ENCODE measurements at regions of chr2 and their contacts with region 1.

Region 1: GRCh38 chr2:10434886-10435819 is 13.0 kb downstream of the ODC1 start:
- DNase-seq: peak; percentile 51 to 86 (median 74)
- ATAC-seq: peak; percentile 74
- H3K4me3 ChIP-seq: no peak overlapping the region
- H3K4me3 Mint-ChIP-seq: no peak overlapping the region
- H3K27ac ChIP-seq: no peak overlapping the region
- H3K27ac Mint-ChIP-seq: no peak overlapping the region
- H3K4me1 ChIP-seq: peaks cover 14% of the 10 kb centered on the region
- H3K4me1 Mint-ChIP-seq: peaks cover 16% of the 10 kb centered on the region
- H3K27me3 ChIP-seq: peaks cover 0 to 4% of the 10 kb centered on the region in 2 experiments
- H3K27me3 Mint-ChIP-seq: peaks cover 2% of the 10 kb centered on the region
- CTCF ChIP-seq: peak; percentile 93

Region 2: GRCh38 chr2:9984217-9984739 is 450.9 kb before region 1 on chr2:
- CTCF ChIA-PET with region 1: interaction called, 11 read pairs
- POLR2A ChIA-PET with region 1: no interaction called
- intact Hi-C with region 1: no loop called
- DNase-seq: peak in 6 of 9 experiments; percentile 7 to 77 (median 21)
- ATAC-seq: peak; percentile 87
- H3K4me3 ChIP-seq: no peak overlapping the region
- H3K4me3 Mint-ChIP-seq: no peak overlapping the region
- H3K27ac ChIP-seq: no peak overlapping the region
- H3K27ac Mint-ChIP-seq: no peak overlapping the region
- H3K4me1 ChIP-seq: peaks cover 9% of the 10 kb centered on the region
- H3K4me1 Mint-ChIP-seq: peaks cover 11% of the 10 kb centered on the region
- H3K27me3 ChIP-seq: no peaks in the 10 kb centered on the region
- H3K27me3 Mint-ChIP-seq: peaks cover 4% of the 10 kb centered on the region
- CTCF ChIP-seq: peak; percentile 84

Region 3: GRCh38 chr2:10141736-10142642 is 293.2 kb before region 1 on chr2:
- CTCF ChIA-PET with region 1: interaction called, 23 read pairs
- POLR2A ChIA-PET with region 1: no interaction called
- intact Hi-C with region 1: no loop called
- DNase-seq: peak in 5 of 9 experiments; percentile 28 to 49 (median 35)
- ATAC-seq: peak; percentile 62
- H3K4me3 ChIP-seq: no peak overlapping the region
- H3K4me3 Mint-ChIP-seq: peak overlapping the region; percentile 37
- H3K27ac ChIP-seq: no peak overlapping the region
- H3K27ac Mint-ChIP-seq: no peak overlapping the region
- H3K4me1 ChIP-seq: peaks cover 17% of the 10 kb centered on the region
- H3K4me1 Mint-ChIP-seq: peaks cover 18% of the 10 kb centered on the region
- H3K27me3 ChIP-seq: no peaks in the 10 kb centered on the region
- H3K27me3 Mint-ChIP-seq: no peaks in the 10 kb centered on the region
- CTCF ChIP-seq: peak; percentile 17

Region 4: DNA sequence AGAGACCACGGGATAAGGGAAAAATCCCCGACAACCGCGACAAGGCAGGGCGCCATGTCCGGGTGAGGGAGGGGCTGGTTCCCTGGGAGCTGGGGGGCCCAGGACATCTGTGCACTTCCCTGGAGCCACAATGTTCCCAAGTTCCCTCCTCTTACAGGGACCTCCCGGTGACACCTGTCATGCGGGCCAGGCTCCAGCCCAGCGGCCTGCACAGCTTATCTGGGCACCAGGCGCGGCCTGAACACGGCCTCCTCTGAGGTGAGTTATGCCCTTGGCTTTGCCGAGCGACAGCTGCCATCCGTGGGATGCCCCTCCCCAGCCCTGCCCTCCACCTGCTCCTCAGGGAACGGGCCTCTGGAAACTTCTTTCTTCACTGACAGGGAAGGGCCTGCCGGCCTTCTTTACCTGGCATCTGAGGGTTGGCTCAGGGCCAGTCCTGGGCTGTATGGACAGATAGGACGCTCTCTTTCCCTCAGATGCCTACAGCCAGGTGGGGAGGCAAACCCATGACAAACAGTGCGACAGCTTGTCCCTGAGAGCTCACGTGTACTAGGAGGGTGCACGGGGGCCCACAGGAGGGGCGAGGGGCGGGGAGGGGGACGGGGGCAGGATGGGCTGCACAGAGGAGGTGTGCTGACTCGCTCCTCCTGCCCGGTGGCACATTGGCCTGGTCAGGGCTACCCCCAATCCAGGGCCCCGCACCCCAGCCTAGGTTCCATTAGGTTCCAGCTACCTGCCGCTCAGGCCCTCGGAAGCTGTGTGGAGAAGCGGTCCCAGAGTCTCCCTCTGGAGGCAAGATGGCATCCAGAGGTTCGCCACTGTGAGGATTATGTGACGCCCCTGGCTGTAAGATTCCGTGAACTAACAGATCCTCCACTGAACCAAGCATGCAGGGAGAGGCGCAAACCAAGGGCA is 167.3 kb before region 1 on chr2:
- CTCF ChIA-PET with region 1: interaction called, 43 read pairs
- POLR2A ChIA-PET with region 1: no interaction called
- intact Hi-C with region 1: loop called (anchors 1 kb)
- DNase-seq: no peak
- ATAC-seq: no peak
- H3K4me3 ChIP-seq: no peak overlapping the region
- H3K4me3 Mint-ChIP-seq: no peak overlapping the region
- H3K27ac ChIP-seq: no peak overlapping the region
- H3K27ac Mint-ChIP-seq: no peak overlapping the region
- H3K4me1 ChIP-seq: peaks cover 10% of the 10 kb centered on the region
- H3K4me1 Mint-ChIP-seq: peaks cover 6% of the 10 kb centered on the region
- H3K27me3 ChIP-seq: no peaks in the 10 kb centered on the region
- H3K27me3 Mint-ChIP-seq: no peaks in the 10 kb centered on the region
- CTCF ChIP-seq: no peak

Region 5: GRCh38 chr2:10398496-10398895 is 36.7 kb before region 1 on chr2:
- CTCF ChIA-PET with region 1: no interaction called
- POLR2A ChIA-PET with region 1: no interaction called
- intact Hi-C with region 1: no loop called
- DNase-seq: no peak
- ATAC-seq: no peak
- H3K4me3 ChIP-seq: no peak overlapping the region
- H3K4me3 Mint-ChIP-seq: no peak overlapping the region
- H3K27ac ChIP-seq: no peak overlapping the region
- H3K27ac Mint-ChIP-seq: peak overlapping the region; percentile 72
- H3K4me1 ChIP-seq: peaks cover 19% of the 10 kb centered on the region
- H3K4me1 Mint-ChIP-seq: peaks cover 51% of the 10 kb centered on the region
- H3K27me3 ChIP-seq: no peaks in the 10 kb centered on the region
- H3K27me3 Mint-ChIP-seq: no peaks in the 10 kb centered on the region
- CTCF ChIP-seq: no peak

Region 6: GRCh38 chr2:11187083-11187619 is 752.0 kb after region 1 on chr2:
- CTCF ChIA-PET with region 1: no interaction called
- POLR2A ChIA-PET with region 1: no interaction called
- intact Hi-C with region 1: no loop called
- DNase-seq: no peak
- ATAC-seq: no peak
- H3K4me3 ChIP-seq: no peak overlapping the region
- H3K4me3 Mint-ChIP-seq: no peak overlapping the region
- H3K27ac ChIP-seq: no peak overlapping the region
- H3K27ac Mint-ChIP-seq: no peak overlapping the region
- H3K4me1 ChIP-seq: no peaks in the 10 kb centered on the region
- H3K4me1 Mint-ChIP-seq: no peaks in the 10 kb centered on the region
- H3K27me3 ChIP-seq: no peaks in the 10 kb centered on the region
- H3K27me3 Mint-ChIP-seq: no peaks in the 10 kb centered on the region
- CTCF ChIP-seq: no peak